Activated T-helper 1 cell treated with anti-CD3 and anti-CD28 coated beads, Interleukin-12 subunit alpha, Interleukin-12 subunit beta, Interleukin-2, Interleukin-4 antibody, amounts not matched to agents 30 ng/mL and 10 ng/mL and 1 ng/mL, durations not matched to agents 14 hours and 24 hours and 36 hours (primary cell): ENCODE measurements at regions of chr13 and their contacts with region 1.

Region 1: DNA sequence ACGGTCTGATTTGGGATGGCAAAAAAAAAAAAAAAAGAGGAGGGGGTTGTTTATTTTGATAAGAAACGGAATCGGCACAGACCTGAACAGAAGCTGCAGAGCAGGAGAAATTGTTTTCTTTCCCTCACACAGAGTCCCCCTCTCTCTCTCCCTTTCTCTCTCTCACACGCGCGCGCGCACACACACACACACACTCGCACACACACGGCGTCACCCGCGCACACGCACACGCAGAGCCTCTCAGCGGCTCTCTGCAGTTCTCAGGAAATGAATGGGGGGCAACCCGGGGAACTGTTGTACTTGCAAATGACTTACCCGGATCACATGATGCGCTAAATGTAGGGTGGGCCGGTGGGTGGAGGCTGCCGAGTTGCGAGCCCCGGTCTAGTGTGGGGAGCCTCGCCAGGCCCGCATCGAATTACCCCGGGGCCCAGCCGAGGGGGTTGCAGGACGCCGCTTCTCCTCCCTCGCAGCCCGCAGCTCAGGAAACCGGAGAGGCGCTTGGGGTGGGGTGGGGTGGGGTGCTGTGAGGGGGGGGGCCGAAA is 475 bp downstream of the KLF12 start:
- DNase-seq: peak; percentile 76
- H3K4me3 Mint-ChIP-seq: peak overlapping the region; percentile 95
- H3K27ac Mint-ChIP-seq: peak overlapping the region; percentile 99
- H3K4me1 Mint-ChIP-seq: peaks cover 49% of the 10 kb centered on the region
- H3K27me3 Mint-ChIP-seq: peaks cover 3% of the 10 kb centered on the region

Region 2: DNA sequence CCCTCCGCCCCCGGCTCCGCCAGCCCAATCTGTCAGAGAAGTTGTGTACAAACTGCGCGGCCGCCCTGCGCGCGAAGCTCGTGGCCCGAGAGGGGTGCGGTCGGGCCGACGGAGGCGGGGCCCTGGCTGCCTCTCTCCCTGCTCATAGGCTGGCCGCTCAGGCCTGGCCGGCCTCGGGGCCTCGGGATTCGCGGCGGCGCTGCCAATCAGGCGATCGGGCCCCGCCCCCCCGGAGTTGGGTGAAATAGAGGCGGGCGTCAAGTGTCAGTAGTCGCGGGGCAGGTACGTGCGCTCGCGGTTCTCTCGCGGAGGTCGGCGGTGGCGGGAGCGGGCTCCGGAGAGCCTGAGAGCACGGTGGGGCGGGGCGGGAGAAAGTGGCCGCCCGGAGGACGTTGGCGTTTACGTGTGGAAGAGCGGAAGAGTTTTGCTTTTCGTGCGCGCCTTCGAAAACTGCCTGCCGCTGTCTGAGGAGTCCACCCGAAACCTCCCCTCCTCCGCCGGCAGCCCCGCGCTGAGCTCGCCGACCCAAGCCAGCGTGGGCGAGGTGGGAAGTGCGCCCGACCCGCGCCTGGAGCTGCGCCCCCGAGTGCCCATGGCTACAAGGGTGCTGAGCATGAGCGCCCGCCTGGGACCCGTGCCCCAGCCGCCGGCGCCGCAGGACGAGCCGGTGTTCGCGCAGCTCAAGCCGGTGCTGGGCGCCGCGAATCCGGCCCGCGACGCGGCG is 1074.8 kb before region 1 on chr13 and contains the start of gene KLF5:
- intact Hi-C with region 1: loop called (anchors 10 kb)
- DNase-seq: peak; percentile 97
- H3K4me3 Mint-ChIP-seq: peak within 1 kb of the TSS; percentile 82
- H3K27ac Mint-ChIP-seq: peak within 1 kb of the TSS; percentile 74
- H3K4me1 Mint-ChIP-seq: peaks cover 20% of the 10 kb centered on the region
- H3K27me3 Mint-ChIP-seq: peaks cover 51% of the 10 kb centered on the region
- total RNA-seq, gene KLF5: 2.4 and 2.5 TPM in 2 replicates

Region 3: GRCh38 chr13:73835138-73835721 is 298.5 kb before region 1 on chr13:
- intact Hi-C with region 1: loop called (anchors 1 kb)
- DNase-seq: no peak
- H3K4me3 Mint-ChIP-seq: no peak overlapping the region
- H3K27ac Mint-ChIP-seq: no peak overlapping the region
- H3K4me1 Mint-ChIP-seq: peaks cover 5% of the 10 kb centered on the region
- H3K27me3 Mint-ChIP-seq: no peaks in the 10 kb centered on the region

Region 4: GRCh38 chr13:73943137-73943964 is 190.4 kb before region 1 on chr13:
- intact Hi-C with region 1: loop called (anchors 2 kb)
- DNase-seq: no peak
- H3K4me3 Mint-ChIP-seq: no peak overlapping the region
- H3K27ac Mint-ChIP-seq: no peak overlapping the region
- H3K4me1 Mint-ChIP-seq: peaks cover 41% of the 10 kb centered on the region
- H3K27me3 Mint-ChIP-seq: no peaks in the 10 kb centered on the region

Region 5: DNA sequence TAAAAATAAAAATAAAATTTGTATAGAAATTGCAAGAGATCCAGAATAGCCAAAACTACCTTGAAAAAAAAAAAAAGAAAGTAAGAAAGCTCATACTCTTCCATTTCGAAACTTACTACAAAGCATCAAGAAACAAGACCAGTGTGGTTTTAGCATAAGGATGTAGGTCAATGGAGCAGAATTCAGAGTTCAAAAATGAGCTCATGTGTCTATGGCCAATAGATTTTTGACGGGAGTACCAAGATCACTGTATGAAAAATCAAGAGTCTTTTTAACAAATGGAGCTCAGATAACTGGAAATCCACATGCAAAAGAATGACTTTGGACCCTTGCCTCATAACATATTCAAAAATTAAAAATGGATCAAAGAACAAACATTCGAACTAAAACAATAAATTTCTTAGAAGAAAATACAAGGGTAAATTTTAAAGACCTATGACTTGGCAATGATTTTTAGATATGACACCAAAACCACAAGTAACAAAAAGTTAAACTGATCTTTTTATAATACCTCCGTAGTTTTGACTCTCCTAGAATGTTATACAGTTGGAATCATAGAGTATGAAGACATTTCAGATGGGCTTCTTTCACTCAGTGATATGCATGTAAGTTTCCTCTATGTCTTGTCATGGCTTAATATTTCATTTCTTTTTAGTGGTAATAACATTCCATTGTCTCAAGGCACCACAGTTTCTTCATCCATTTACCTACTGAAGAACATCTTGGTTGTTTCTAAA is 42.7 kb before region 1 on chr13:
- intact Hi-C with region 1: loop called (anchors 2 kb)
- DNase-seq: no peak
- H3K4me3 Mint-ChIP-seq: no peak overlapping the region
- H3K27ac Mint-ChIP-seq: no peak overlapping the region
- H3K4me1 Mint-ChIP-seq: peaks cover 36% of the 10 kb centered on the region
- H3K27me3 Mint-ChIP-seq: no peaks in the 10 kb centered on the region

Region 6: GRCh38 chr13:74280795-74281490 is 147.2 kb after region 1 on chr13:
- intact Hi-C with region 1: no loop called
- DNase-seq: no peak
- H3K4me3 Mint-ChIP-seq: no peak overlapping the region
- H3K27ac Mint-ChIP-seq: no peak overlapping the region
- H3K4me1 Mint-ChIP-seq: no peaks in the 10 kb centered on the region
- H3K27me3 Mint-ChIP-seq: peaks cover 2% of the 10 kb centered on the region

Region 7: DNA sequence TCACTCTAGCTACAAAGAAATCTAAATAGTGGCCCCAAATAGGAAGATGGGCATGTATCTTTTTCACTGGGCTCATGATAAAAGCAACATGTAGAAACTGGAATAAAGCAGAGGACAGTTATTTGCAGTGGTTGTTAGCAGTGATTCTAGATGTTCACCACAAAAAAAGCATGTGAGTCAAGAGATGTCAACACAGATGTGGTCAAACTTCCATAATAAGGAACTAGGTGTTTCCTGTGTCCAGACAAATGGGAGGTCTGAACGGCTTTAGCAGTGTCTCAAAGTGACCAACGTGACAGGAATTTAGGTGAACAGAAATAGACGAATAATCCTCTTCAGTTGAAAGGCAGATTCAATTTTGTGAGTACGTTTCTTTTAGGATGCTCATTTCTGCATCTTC is 1185.5 kb after region 1 on chr13:
- intact Hi-C with region 1: loop called (anchors 5 kb)
- DNase-seq: no peak
- H3K4me3 Mint-ChIP-seq: peak overlapping the region; percentile 9
- H3K27ac Mint-ChIP-seq: peak overlapping the region; percentile 99
- H3K4me1 Mint-ChIP-seq: peaks cover 68% of the 10 kb centered on the region
- H3K27me3 Mint-ChIP-seq: no peaks in the 10 kb centered on the region

Region 8: DNA sequence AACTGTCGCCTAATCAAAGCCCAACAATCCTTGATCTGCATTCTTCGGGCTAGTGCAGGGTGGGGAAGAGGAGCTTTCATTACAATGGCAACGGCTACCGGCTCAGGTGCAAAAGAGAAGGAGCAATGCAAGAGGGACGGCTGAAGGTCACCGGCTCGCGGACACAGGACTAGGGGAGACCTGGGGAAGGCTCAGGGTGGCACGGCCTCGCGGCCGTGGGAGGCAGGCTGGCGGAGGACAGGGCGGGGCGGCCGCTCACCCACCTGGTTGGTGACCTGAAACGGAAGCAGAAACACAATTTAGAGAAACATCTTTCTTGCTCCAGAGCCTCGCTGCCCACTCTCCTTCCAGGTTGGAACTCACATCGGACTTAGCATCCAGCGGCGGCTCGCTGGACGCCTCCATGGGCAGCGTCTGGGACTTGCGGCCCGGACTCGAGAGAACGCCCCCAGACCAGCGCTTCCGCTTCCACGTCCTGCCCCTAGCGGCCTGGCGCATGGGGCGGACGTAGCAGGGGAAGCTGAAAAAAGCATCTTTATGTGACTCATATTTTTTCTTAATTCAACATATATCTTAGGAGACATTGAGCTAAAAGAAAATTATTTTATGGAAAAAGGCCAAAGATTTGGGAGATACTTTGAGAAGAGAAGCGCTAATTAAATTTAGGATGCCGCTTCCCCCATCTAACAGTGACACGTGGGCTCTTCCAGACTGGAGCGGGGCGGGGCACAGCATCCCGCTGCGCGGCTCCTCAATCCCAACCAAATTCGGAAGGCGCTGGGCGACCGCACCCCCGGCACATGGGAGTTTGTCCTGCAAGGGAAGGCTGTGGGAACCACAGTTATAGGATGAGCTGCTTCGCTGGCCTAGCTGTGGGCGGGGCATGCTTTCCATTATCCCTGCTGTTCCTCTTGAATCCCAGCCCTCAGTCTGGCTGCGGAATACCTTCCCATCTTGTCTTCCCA is 1404.0 kb after region 1 on chr13 and contains the start of gene COMMD6:
- intact Hi-C with region 1: loop called (anchors 10 kb)
- DNase-seq: peak; percentile 60
- H3K4me3 Mint-ChIP-seq: peak within 1 kb of the TSS; percentile 94
- H3K27ac Mint-ChIP-seq: peak within 1 kb of the TSS; percentile 87
- H3K4me1 Mint-ChIP-seq: peaks cover 44% of the 10 kb centered on the region
- H3K27me3 Mint-ChIP-seq: no peaks in the 10 kb centered on the region
- total RNA-seq, gene COMMD6: 87.1 and 88.7 TPM in 2 replicates